Activated T-helper 2 cell treated with anti-CD3 and anti-CD28 coated beads, Interferon-gamma antibody, Interleukin-2, Interleukin-4, amounts not matched to agents 10 μg/mL and 5 μg/mL and 100 μg/mL, durations not matched to agents 14 hours and 24 hours and 36 hours (primary cell): ENCODE measurements at regions of chr5 and their contacts with region 1.

Region 1: GRCh38 chr5:52787600-52788504 is at the starts of genes ITGA1 and PELO:
- DNase-seq: peak; percentile 27
- H3K4me3 Mint-ChIP-seq: peak within 1 kb of the TSS; percentile 86
- H3K27ac Mint-ChIP-seq: peak within 1 kb of the TSS; percentile 21
- H3K4me1 Mint-ChIP-seq: peaks cover 22% of the 10 kb centered on the region
- H3K27me3 Mint-ChIP-seq: peaks cover 59% of the 10 kb centered on the region
- total RNA-seq, gene ITGA1: 0.59 and 0.76 TPM in 2 replicates
- total RNA-seq, gene PELO: 14.4 and 17.1 TPM in 2 replicates

Region 2: GRCh38 chr5:52743970-52744369 is 43.9 kb before region 1 on chr5:
- intact Hi-C with region 1: loop called (anchors 5 kb)
- DNase-seq: peak; percentile 54
- H3K4me3 Mint-ChIP-seq: peak overlapping the region; percentile 3
- H3K27ac Mint-ChIP-seq: peak overlapping the region; percentile 51
- H3K4me1 Mint-ChIP-seq: peaks cover 59% of the 10 kb centered on the region
- H3K27me3 Mint-ChIP-seq: no peaks in the 10 kb centered on the region

Region 3: GRCh38 chr5:52771343-52772039 is 16.4 kb before region 1 on chr5:
- intact Hi-C with region 1: loop called (anchors 1 kb)
- DNase-seq: peak; percentile 19
- H3K4me3 Mint-ChIP-seq: peak overlapping the region; percentile 14
- H3K27ac Mint-ChIP-seq: peak overlapping the region; percentile 47
- H3K4me1 Mint-ChIP-seq: peaks cover 66% of the 10 kb centered on the region
- H3K27me3 Mint-ChIP-seq: peaks cover 5% of the 10 kb centered on the region

Region 4: DNA sequence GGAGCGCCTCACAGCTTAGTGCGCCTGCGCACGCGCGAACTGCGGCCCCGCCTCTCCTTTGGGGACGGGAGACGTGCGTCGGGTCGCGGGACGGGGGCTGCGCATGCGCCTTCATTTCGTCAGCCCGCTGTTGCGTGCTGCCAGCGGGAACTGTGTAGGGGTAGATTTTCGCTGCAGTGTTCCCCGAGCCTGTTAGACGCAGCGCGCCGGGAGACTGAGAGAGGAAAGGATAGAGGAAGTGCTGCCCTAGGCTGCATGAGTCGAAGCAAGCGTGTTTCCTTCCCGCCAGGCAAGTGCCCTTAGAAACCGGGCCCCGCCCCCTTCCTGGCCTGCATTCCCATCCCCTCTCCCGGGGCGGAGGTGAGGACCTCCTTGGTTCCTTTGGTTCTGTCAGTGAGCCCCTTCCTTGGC is 12.1 kb after region 1 on chr5:
- intact Hi-C with region 1: loop called (anchors 1 kb)
- DNase-seq: peak; percentile 95
- H3K4me3 Mint-ChIP-seq: peak overlapping the region; percentile 91
- H3K27ac Mint-ChIP-seq: peak overlapping the region; percentile 92
- H3K4me1 Mint-ChIP-seq: peaks cover 55% of the 10 kb centered on the region
- H3K27me3 Mint-ChIP-seq: peaks cover 6% of the 10 kb centered on the region

Region 5: DNA sequence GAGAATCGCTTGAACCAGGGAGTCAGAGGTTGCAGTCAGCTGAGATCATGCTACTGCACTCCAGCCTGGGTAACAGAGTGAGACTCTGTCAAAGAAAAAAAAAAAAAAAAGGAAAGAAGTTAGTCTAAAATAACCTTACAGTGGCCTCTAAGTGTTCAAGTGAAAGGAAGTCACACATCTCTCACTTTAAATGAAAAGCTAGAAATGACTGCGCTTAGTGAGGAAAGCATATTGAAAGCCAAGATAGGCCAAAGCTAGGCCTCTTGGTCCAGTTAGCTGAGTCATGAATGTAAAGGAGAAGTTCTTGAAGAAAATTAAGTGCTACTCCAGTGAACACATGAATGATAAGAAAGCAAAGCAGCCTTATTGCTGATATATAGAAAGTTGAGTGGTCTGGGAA is 38.0 kb after region 1 on chr5:
- intact Hi-C with region 1: loop called (anchors 5 kb)
- DNase-seq: no peak
- H3K4me3 Mint-ChIP-seq: no peak overlapping the region
- H3K27ac Mint-ChIP-seq: no peak overlapping the region
- H3K4me1 Mint-ChIP-seq: peaks cover 9% of the 10 kb centered on the region
- H3K27me3 Mint-ChIP-seq: no peaks in the 10 kb centered on the region

Region 6: DNA sequence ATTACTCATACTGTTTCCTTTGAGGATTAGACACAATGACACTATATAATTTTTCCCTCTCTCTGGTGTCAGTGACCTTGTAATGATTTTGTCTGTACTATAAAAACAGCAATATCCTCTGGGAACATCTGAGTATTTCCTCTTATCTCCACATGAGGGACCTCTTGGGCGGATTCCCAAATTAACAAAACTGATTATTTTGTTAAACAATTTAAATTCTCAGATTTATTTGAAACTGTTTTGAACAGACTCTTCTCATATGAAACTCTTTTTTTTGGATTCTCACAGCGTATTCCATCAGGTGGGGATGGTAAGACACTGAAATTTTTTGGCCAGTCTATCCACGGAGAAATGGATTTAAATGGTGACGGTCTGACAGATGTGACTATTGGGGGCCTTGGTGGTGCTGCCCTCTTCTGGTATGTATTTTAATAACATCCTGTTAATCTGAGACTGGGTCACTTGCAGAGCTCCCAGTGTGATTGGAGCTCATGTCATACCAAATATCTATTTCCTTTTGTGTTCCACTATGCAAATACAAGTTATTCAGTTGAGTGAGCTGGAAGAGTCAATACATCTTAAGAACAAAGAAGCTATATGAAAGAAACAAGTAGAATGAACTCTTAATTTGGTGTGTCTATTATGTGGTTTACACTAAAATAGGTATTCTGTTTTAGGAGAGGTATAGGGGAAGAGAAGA is 127.5 kb after region 1 on chr5:
- intact Hi-C with region 1: loop called (anchors 5 kb)
- DNase-seq: peak; percentile 31
- H3K4me3 Mint-ChIP-seq: peak overlapping the region; percentile 34
- H3K27ac Mint-ChIP-seq: no peak overlapping the region
- H3K4me1 Mint-ChIP-seq: peaks cover 4% of the 10 kb centered on the region
- H3K27me3 Mint-ChIP-seq: peaks cover 15% of the 10 kb centered on the region

Region 7: GRCh38 chr5:53089345-53089991 is 301.6 kb after region 1 on chr5:
- intact Hi-C with region 1: loop called (anchors 5 kb)
- DNase-seq: no peak
- H3K4me3 Mint-ChIP-seq: peak overlapping the region; percentile 59
- H3K27ac Mint-ChIP-seq: peak overlapping the region; percentile 65
- H3K4me1 Mint-ChIP-seq: peaks cover 51% of the 10 kb centered on the region
- H3K27me3 Mint-ChIP-seq: peaks cover 2% of the 10 kb centered on the region